Activated CD4-positive, alpha-beta memory T cell treated with anti-CD3 and anti-CD28 coated beads for 36 hours (primary cell): ENCODE measurements at regions of chr2 and their contacts with region 1.

Region 1: GRCh38 chr2:136384531-136385303 is 266.8 kb upstream of the CXCR4 start:
- DNase-seq: peak; percentile 60
- H3K4me3 Mint-ChIP-seq: no peak overlapping the region
- H3K27ac Mint-ChIP-seq: peak overlapping the region; percentile 96
- H3K4me1 Mint-ChIP-seq: peaks cover 45% of the 10 kb centered on the region
- H3K27me3 Mint-ChIP-seq: no peaks in the 10 kb centered on the region

Region 2: DNA sequence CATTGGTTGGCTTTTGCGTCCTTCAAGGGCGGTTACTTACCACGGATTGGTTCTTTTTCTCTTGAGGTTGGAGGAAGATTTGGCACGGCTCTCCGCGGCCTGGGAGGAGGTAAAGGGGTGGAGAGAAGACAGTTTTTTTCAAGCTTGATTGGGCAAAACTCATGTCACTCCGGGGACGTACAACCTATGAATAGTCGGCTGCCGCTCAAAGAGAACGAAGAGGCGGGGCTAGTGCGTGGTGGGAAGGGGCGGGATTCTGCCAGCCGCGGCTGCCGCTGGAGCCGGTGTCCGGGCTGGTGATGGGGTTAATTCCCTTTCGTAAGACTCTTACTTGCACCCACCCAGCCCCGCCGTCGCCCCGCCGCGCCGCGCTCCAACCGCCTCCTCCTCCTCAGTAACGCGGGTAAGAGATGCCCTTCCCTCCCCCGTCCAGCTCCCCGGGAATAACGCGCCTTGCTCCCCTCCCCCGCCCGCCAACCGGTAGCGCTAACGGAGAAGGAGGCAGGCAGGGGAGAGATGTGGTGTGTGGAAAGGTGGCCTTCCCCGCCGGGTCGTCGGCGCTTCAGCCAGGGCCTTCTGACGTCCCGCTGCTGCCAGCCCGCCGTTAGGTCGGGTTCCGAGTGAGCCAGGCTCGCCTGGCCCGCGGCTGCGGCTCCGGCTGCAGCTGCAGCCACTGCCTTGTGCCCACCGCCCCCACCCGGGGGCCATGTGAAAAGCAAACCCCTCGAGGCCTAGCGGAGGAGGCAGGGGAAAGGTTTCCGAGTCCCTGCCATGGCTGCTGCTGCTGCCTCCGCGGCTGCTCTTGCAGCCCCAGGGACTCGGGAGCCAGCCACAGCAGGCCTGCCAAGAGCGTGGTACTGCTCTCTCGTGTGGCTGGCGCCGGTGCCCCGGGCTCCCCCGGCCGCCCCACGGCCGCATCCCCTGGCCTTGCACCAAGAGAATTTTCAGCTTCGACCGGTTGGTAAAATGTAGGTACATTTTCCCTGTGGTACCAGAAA is 853.2 kb before region 1 on chr2 and contains the start of gene R3HDM1:
- CTCF ChIA-PET with region 1: no interaction called
- POLR2A ChIA-PET with region 1: no interaction called
- intact Hi-C with region 1: loop called (anchors 2 kb)
- DNase-seq: peak; percentile 97
- H3K4me3 Mint-ChIP-seq: no peak within 1 kb of the TSS
- H3K27ac Mint-ChIP-seq: peak within 1 kb of the TSS; percentile 71
- H3K4me1 Mint-ChIP-seq: peaks cover 29% of the 10 kb centered on the region
- H3K27me3 Mint-ChIP-seq: no peaks in the 10 kb centered on the region
- total RNA-seq, gene R3HDM1: 49.3 to 56.3 TPM

Region 3: DNA sequence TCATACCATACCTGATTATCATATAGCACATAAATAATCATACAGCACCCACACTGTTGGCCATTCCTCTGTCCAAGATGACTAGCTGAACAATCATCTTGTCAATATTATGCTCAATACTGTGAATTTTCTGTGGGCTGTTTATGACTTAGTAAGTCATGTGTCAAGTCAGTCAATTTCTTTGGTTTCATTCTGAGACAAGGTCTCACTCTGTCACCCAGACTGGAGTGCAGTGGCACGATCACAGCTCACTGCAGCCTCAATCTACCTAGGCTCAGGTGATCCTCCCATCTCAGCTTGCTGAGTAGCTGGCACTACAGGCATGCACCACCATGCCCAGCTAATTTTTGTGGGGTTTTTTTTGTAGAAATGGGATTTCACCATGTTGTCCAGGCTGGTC is 514.1 kb before region 1 on chr2:
- CTCF ChIA-PET with region 1: interaction called, 8 read pairs
- POLR2A ChIA-PET with region 1: interaction called, 20 read pairs
- intact Hi-C with region 1: loop called (anchors 1 kb)
- DNase-seq: peak; percentile 64
- H3K4me3 Mint-ChIP-seq: no peak overlapping the region
- H3K27ac Mint-ChIP-seq: peak overlapping the region; percentile 44
- H3K4me1 Mint-ChIP-seq: peaks cover 55% of the 10 kb centered on the region
- H3K27me3 Mint-ChIP-seq: no peaks in the 10 kb centered on the region

Region 4: DNA sequence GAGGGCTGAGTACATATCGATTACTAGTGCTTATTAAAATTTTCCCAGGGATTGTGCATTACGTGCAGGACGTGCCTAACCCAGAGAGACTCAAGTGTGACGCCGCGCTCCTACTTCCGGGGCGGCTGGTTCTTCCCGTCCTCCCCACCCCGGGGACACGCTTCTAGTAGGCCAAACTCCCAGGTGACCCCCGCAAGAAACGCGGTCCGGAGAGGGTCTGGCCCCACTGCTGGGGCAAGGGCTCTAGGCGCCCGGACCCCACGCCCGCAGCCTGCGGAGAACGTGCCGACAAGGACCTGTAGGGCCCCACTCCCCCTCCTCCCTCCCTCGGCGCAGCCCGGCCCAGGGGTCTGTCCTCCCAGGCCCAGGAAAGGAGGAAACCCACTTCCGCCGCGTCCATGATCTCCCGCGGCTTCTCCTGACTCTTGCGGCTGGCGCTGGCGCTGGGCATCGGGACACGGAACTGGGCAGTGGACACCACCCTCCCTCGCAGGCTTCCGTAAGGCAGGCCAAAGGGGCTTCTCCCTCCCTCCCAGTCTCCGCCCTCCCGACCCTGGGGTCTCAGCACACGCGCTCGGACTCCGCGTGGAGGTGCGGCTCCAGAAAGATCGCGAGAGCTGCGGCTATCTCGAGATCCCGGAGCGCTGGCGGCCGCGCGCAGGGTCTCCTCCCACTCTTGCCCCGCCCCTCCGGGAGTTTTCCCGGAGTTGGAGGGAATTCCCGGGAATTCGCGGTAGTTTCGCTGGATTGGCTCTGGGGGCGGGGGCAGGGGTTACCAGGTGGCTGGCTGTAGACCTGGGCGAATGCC is 399.5 kb before region 1 on chr2 and contains the start of gene DARS1:
- CTCF ChIA-PET with region 1: interaction called, 10 read pairs
- POLR2A ChIA-PET with region 1: interaction called, 22 read pairs
- intact Hi-C with region 1: loop called (anchors 1 kb)
- DNase-seq: peak; percentile 92
- H3K4me3 Mint-ChIP-seq: peak within 1 kb of the TSS; percentile 90
- H3K27ac Mint-ChIP-seq: peak within 1 kb of the TSS; percentile 97
- H3K4me1 Mint-ChIP-seq: peaks cover 48% of the 10 kb centered on the region
- H3K27me3 Mint-ChIP-seq: no peaks in the 10 kb centered on the region
- total RNA-seq, gene DARS1: 215 to 218 TPM

Region 5: DNA sequence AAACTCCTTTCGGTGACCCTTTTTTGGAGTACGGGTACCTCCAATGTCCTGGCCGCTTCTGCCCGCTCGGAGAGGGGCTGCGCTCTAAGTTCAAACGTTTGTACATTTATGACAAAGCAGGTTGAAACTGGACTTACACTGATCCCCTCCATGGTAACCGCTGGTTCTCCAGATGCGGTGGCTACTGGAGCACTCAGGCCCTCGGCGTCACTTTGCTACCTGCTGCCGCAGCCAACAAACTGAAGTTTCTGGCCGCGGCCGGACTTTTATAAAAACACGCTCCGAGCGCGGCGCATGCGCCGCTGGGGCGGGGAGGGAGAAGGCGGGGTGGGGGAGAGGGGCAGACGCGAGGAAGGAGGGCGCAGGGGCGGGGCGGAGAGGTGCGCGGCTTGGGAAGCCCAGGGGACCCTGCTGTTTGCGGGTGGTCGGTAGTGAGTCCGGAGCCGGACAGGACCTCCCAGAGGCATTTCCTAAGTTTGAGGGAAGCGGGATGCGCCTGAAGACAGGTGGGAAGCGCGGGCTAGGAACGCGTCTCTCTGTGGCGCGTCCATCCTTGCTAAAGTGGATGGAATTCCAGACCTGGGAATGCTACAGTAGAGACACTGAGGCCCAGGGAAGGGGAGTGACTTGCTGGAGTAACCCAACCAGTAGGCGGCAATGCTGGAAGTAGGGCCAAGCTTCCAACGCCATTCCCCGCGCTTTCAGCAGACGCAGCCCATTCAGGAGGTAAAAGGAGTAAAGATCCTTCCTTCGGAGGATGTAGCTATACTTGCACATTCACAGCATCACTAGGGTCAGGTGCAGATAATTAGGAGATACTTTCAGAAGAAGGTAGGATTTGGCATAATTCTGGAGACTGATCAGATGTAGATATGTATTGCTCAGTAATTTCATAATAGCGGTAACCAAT is 266.6 kb before region 1 on chr2 and contains the start of gene CXCR4:
- CTCF ChIA-PET with region 1: interaction called, 7 read pairs
- POLR2A ChIA-PET with region 1: interaction called, 11 read pairs
- intact Hi-C with region 1: loop called (anchors 1 kb)
- DNase-seq: peak; percentile 93
- H3K4me3 Mint-ChIP-seq: peak within 1 kb of the TSS; percentile 98
- H3K27ac Mint-ChIP-seq: peak within 1 kb of the TSS; percentile 98
- H3K4me1 Mint-ChIP-seq: peaks cover 54% of the 10 kb centered on the region
- H3K27me3 Mint-ChIP-seq: peaks cover 2% of the 10 kb centered on the region
- total RNA-seq, gene CXCR4: 139 to 141 TPM

Region 6: GRCh38 chr2:136238286-136239078 is 146.2 kb before region 1 on chr2:
- CTCF ChIA-PET with region 1: interaction called, 26 read pairs
- POLR2A ChIA-PET with region 1: interaction called, 18 read pairs
- intact Hi-C with region 1: loop called (anchors 1 kb)
- DNase-seq: peak; percentile 61
- H3K4me3 Mint-ChIP-seq: no peak overlapping the region
- H3K27ac Mint-ChIP-seq: peak overlapping the region; percentile 93
- H3K4me1 Mint-ChIP-seq: peaks cover 64% of the 10 kb centered on the region
- H3K27me3 Mint-ChIP-seq: no peaks in the 10 kb centered on the region

Region 7: GRCh38 chr2:136423516-136423996 is 38.8 kb after region 1 on chr2:
- CTCF ChIA-PET with region 1: interaction called, 11 read pairs
- POLR2A ChIA-PET with region 1: no interaction called
- intact Hi-C with region 1: no loop called
- DNase-seq: peak; percentile 89
- H3K4me3 Mint-ChIP-seq: peak overlapping the region; percentile 73
- H3K27ac Mint-ChIP-seq: no peak overlapping the region
- H3K4me1 Mint-ChIP-seq: peaks cover 18% of the 10 kb centered on the region
- H3K27me3 Mint-ChIP-seq: peaks cover 31% of the 10 kb centered on the region

Region 8: GRCh38 chr2:136582628-136583205 is 198.0 kb after region 1 on chr2:
- CTCF ChIA-PET with region 1: no interaction called
- POLR2A ChIA-PET with region 1: no interaction called
- intact Hi-C with region 1: no loop called
- DNase-seq: peak; percentile 23
- H3K4me3 Mint-ChIP-seq: no peak overlapping the region
- H3K27ac Mint-ChIP-seq: no peak overlapping the region
- H3K4me1 Mint-ChIP-seq: no peaks in the 10 kb centered on the region
- H3K27me3 Mint-ChIP-seq: no peaks in the 10 kb centered on the region